B cell (primary cell): ENCODE measurements at regions of chr15 and their contacts with region 1.

Region 1: GRCh38 chr15:37134699-37135131 is 34.4 kb upstream of the MEIS2 start:
- DNase-seq: peak; percentile 12
- ATAC-seq: no peak
- H3K4me3 ChIP-seq: no peak overlapping the region
- H3K4me3 Mint-ChIP-seq: no peak overlapping the region
- H3K27ac ChIP-seq: no peak overlapping the region
- H3K27ac Mint-ChIP-seq: no peak overlapping the region
- H3K4me1 ChIP-seq: no peaks in the 10 kb centered on the region
- H3K4me1 Mint-ChIP-seq: no peaks in the 10 kb centered on the region
- H3K27me3 ChIP-seq: no peaks in the 10 kb centered on the region
- H3K27me3 Mint-ChIP-seq: peaks cover 3% of the 10 kb centered on the region
- CTCF ChIP-seq: peak; percentile 71

Region 2: GRCh38 chr15:35519541-35520149 is 1615.1 kb before region 1 on chr15:
- CTCF ChIA-PET with region 1: interaction called, 11 read pairs
- POLR2A ChIA-PET with region 1: no interaction called
- intact Hi-C with region 1: no loop called
- DNase-seq: peak; percentile 54
- ATAC-seq: no peak
- H3K4me3 ChIP-seq: no peak overlapping the region
- H3K4me3 Mint-ChIP-seq: no peak overlapping the region
- H3K27ac ChIP-seq: no peak overlapping the region
- H3K27ac Mint-ChIP-seq: no peak overlapping the region
- H3K4me1 ChIP-seq: no peaks in the 10 kb centered on the region
- H3K4me1 Mint-ChIP-seq: no peaks in the 10 kb centered on the region
- H3K27me3 ChIP-seq: no peaks in the 10 kb centered on the region
- H3K27me3 Mint-ChIP-seq: no peaks in the 10 kb centered on the region
- CTCF ChIP-seq: peak; percentile 79

Region 3: DNA sequence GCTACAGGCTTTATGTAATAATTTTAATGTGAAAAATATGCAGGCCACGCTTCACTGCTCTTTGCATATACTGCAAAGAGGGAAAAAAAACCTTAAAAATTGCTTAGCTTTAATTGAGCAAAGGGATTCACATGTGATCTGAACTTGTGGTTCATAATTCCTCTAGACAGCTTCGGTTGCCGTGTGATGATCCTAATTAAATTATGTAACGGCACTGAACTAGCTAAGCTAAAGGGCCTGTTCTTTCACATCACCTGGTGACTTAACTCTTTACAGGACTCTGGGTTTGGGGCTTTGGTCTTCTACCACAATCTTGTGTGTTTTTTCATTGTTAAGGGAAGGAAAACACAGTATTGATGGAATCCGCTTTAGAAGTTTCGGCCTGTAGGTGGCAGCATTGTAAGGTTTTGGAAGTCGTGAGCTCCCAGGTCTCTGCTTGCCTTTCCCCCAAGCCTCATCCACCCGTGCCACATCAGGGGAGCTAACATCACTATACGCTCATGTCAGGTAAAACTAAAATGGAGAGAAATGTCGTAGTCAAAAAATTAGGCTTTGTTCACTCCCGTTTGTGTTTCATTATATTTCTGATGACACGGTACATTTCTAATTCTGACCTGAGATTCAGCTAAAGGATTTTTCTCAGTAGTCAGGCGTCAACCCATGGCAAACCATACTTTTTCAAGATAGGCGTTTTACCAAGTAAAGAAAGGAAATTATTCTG is 1383.1 kb before region 1 on chr15:
- CTCF ChIA-PET with region 1: no interaction called
- POLR2A ChIA-PET with region 1: no interaction called
- intact Hi-C with region 1: loop called (anchors 5 kb)
- DNase-seq: peak; percentile 37
- ATAC-seq: no peak
- H3K4me3 ChIP-seq: no peak overlapping the region
- H3K4me3 Mint-ChIP-seq: no peak overlapping the region
- H3K27ac ChIP-seq: no peak overlapping the region
- H3K27ac Mint-ChIP-seq: no peak overlapping the region
- H3K4me1 ChIP-seq: no peaks in the 10 kb centered on the region
- H3K4me1 Mint-ChIP-seq: no peaks in the 10 kb centered on the region
- H3K27me3 ChIP-seq: no peaks in the 10 kb centered on the region
- H3K27me3 Mint-ChIP-seq: no peaks in the 10 kb centered on the region
- CTCF ChIP-seq: peak; percentile 74

Region 4: GRCh38 chr15:36501063-36501678 is 633.5 kb before region 1 on chr15:
- CTCF ChIA-PET with region 1: interaction called, 10 read pairs
- POLR2A ChIA-PET with region 1: no interaction called
- intact Hi-C with region 1: no loop called
- DNase-seq: peak; percentile 29
- ATAC-seq: no peak
- H3K4me3 ChIP-seq: no peak overlapping the region
- H3K4me3 Mint-ChIP-seq: no peak overlapping the region
- H3K27ac ChIP-seq: no peak overlapping the region
- H3K27ac Mint-ChIP-seq: no peak overlapping the region
- H3K4me1 ChIP-seq: no peaks in the 10 kb centered on the region
- H3K4me1 Mint-ChIP-seq: no peaks in the 10 kb centered on the region
- H3K27me3 ChIP-seq: no peaks in the 10 kb centered on the region
- H3K27me3 Mint-ChIP-seq: peaks cover 10% of the 10 kb centered on the region
- CTCF ChIP-seq: peak; percentile 65

Region 5: GRCh38 chr15:37246065-37246464 is 111.3 kb after region 1 on chr15:
- CTCF ChIA-PET with region 1: no interaction called
- POLR2A ChIA-PET with region 1: no interaction called
- intact Hi-C with region 1: no loop called
- DNase-seq: no peak
- ATAC-seq: no peak
- H3K4me3 ChIP-seq: no peak overlapping the region
- H3K4me3 Mint-ChIP-seq: no peak overlapping the region
- H3K27ac ChIP-seq: no peak overlapping the region
- H3K27ac Mint-ChIP-seq: no peak overlapping the region
- H3K4me1 ChIP-seq: no peaks in the 10 kb centered on the region
- H3K4me1 Mint-ChIP-seq: no peaks in the 10 kb centered on the region
- H3K27me3 ChIP-seq: no peaks in the 10 kb centered on the region
- H3K27me3 Mint-ChIP-seq: no peaks in the 10 kb centered on the region
- CTCF ChIP-seq: no peak